Heart right ventricle (tissue), 16 donors: ENCODE measurements at regions of chr14 and their contacts with region 1.

Region 1: DNA sequence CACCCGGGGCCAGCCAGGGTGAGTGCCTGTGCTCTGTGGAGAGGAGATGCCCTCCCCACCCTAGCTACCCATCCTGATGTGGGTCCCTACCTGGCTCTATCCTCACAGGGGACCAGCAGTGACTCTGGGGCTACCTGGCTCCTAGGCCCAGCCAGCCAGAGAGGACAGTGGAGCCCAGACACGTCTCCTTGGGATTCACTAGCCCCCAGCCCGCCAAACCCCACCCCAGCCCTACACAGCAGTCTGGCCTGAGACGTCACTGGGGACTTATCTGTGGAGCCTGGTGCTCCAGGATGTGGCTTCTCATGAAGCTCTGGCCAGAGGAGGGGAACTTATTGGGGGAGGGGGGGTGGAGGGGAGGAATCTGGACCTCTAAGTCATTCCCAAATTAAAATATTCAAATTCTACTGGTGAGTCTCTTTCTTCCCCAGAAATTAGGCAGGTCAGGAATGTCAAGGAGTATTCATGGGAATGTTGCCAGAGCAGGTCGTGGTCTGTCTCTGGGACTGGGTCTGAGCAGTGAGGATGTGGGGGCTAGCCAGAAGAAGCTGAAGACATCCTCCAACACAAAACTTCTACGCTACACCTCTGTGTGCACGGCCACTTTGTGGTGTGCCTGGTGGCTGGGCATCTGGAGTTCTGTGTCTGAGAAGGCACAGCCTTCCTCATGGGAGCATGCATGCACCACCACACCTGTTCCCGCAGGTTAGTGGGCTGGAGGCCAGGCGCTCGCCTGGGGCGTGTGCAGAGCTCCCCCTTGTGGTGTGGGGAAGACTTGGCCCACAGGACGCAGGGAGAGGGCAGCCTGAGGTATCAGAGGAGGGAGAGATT is 2.7 kb downstream of the CMTM5 start:
- DNase-seq: peak in 1 of 2 donors; percentile 65
- ATAC-seq: peak; percentile 7 to 56 (median 42)
- H3K4me3 ChIP-seq: no peak overlapping the region
- H3K27ac ChIP-seq: peak overlapping the region in 1 of 10 donors; percentile 16
- H3K4me1 ChIP-seq: peaks cover 0 to 44% (median 8%) of the 10 kb centered on the region in 9 donors
- H3K27me3 ChIP-seq: peaks cover 0 to 7% (median 0%) of the 10 kb centered on the region in 7 donors
- CTCF ChIP-seq: peak; percentile 65 to 89 (median 85)

Region 2: GRCh38 chr14:23258256-23258655 is 121.3 kb before region 1 on chr14:
- intact Hi-C with region 1: loop called in 5 of 10 experiments (anchors 5 to 10 kb)
- DNase-seq: no peak
- ATAC-seq: no peak
- H3K4me3 ChIP-seq: no peak overlapping the region
- H3K27ac ChIP-seq: no peak overlapping the region
- H3K4me1 ChIP-seq: no peaks in the 10 kb centered on the region
- H3K27me3 ChIP-seq: peaks cover 0 to 21% (median 12%) of the 10 kb centered on the region in 7 donors
- CTCF ChIP-seq: no peak

Region 3: GRCh38 chr14:23269193-23269592 is 110.4 kb before region 1 on chr14:
- intact Hi-C with region 1: loop called in 6 of 10 experiments (anchors 5 to 10 kb)
- DNase-seq: no peak
- ATAC-seq: no peak
- H3K4me3 ChIP-seq: no peak overlapping the region
- H3K27ac ChIP-seq: no peak overlapping the region
- H3K4me1 ChIP-seq: no peaks in the 10 kb centered on the region
- H3K27me3 ChIP-seq: no peaks in the 10 kb centered on the region
- CTCF ChIP-seq: no peak

Region 4: DNA sequence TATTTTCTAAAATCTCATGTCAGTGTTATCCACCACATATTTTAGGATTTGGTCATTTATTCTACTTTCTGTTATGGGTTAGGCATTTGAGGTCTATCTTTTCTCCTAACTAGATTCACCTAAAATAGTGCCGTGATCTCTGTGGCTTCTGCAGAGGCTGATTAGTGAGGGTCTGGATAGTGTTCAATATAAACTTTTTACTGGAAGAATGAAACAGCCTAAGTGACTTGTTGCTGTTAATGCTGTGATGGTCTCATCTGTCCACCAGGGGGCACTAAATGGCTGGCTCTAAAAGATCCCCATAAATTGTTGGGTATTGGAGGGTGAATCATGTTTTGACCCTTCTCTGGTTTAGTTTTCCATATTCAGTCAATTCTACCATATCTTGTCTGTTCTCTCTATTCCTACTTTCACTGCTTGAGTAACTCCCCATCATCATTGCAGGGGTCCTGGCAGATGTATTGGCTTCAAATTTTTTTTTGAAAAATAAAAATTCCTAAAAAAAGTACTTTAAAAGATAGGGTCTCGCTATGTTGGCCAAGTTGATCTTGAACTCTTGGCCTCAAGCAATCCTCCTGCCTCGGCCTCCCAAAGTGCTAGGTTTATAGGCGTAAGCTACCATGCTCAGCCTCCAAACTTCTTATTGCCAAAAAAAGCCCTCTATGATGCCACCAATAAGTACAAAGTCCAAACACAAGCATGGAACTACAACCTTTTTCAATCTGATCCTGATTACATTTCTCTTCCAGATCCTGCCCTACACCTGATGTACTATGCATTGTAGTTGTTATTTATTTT is 51.4 kb before region 1 on chr14:
- intact Hi-C with region 1: loop called (anchors 1 to 5 kb)
- DNase-seq: peak in 1 of 2 donors; percentile 73
- ATAC-seq: peak in 7 of 8 donors; percentile 55 to 78 (median 68)
- H3K4me3 ChIP-seq: no peak overlapping the region
- H3K27ac ChIP-seq: no peak overlapping the region
- H3K4me1 ChIP-seq: peaks cover 0 to 10% (median 6%) of the 10 kb centered on the region in 9 donors
- H3K27me3 ChIP-seq: peaks cover 0 to 1% (median 0%) of the 10 kb centered on the region in 7 donors
- CTCF ChIP-seq: peak; percentile 80 to 94 (median 88)

Region 5: GRCh38 chr14:23454445-23454856 is 74.9 kb after region 1 on chr14:
- intact Hi-C with region 1: loop called in 1 of 10 experiments (anchors 10 kb)
- DNase-seq: no peak
- ATAC-seq: peak in 1 of 8 donors; percentile 20
- H3K4me3 ChIP-seq: no peak overlapping the region
- H3K27ac ChIP-seq: no peak overlapping the region
- H3K4me1 ChIP-seq: peaks cover 0 to 5% (median 0%) of the 10 kb centered on the region in 9 donors
- H3K27me3 ChIP-seq: peaks cover 0 to 41% (median 5%) of the 10 kb centered on the region in 7 donors
- CTCF ChIP-seq: no peak